Heart right ventricle (tissue), 16 donors: ENCODE measurements at regions of chr14 and their contacts with region 1.

Region 1: GRCh38 chr14:73633116-73634010 is 11.4 kb upstream of the DNAL1 start:
- DNase-seq: peak; percentile 59 to 65
- ATAC-seq: peak; percentile 86 to 92 (median 90)
- H3K4me3 ChIP-seq: peak overlapping the region; percentile 41 to 70 (median 62)
- H3K27ac ChIP-seq: peak overlapping the region in 9 of 10 donors; percentile 2 to 75 (median 64)
- H3K4me1 ChIP-seq: peaks cover 0 to 17% (median 13%) of the 10 kb centered on the region in 9 donors
- H3K27me3 ChIP-seq: peaks cover 0 to 15% (median 0%) of the 10 kb centered on the region in 7 donors
- CTCF ChIP-seq: peak; percentile 83 to 93 (median 87)

Region 2: GRCh38 chr14:73231981-73232851 is 401.1 kb before region 1 on chr14:
- intact Hi-C with region 1: no loop called
- DNase-seq: no peak
- ATAC-seq: peak in 1 of 8 donors; percentile 48
- H3K4me3 ChIP-seq: no peak overlapping the region
- H3K27ac ChIP-seq: peak overlapping the region in 1 of 10 donors; percentile 69
- H3K4me1 ChIP-seq: peaks cover 6 to 59% (median 19%) of the 10 kb centered on the region in 9 donors
- H3K27me3 ChIP-seq: peaks cover under 1 to 50% (median 29%) of the 10 kb centered on the region in 7 donors
- CTCF ChIP-seq: peak in 1 of 9 donors; percentile 24

Region 3: DNA sequence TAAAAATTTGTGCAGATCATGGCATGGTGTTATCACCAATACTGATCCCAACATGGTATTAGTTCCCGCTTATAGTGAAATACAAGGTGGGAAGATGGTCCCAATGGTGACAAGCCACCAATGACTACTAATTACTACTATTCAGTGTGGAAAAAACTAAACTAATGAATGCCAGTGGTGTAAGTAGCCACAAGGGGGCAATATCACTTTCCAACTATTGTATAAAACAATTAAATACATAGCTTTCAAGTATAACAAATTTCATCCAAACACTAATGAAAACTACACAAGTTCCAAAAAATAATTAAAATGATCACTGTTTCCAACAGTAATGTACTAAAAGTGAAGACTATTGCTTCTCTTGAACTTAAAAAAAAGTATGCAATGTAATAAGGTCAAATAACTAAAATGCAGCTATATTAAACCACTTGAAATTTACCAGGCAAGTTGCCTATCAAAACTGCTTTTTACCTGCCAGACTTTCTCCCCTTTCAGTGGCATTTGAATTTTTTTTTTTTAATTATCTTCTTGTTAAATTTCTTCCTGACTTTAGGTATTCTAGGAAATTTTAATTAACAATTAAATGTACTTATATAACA is 338.1 kb before region 1 on chr14:
- intact Hi-C with region 1: loop called in 1 of 10 experiments (anchors 10 kb)
- DNase-seq: peak in 1 of 2 donors; percentile 14
- ATAC-seq: peak in 1 of 8 donors; percentile 22
- H3K4me3 ChIP-seq: no peak overlapping the region
- H3K27ac ChIP-seq: no peak overlapping the region
- H3K4me1 ChIP-seq: no peaks in the 10 kb centered on the region
- H3K27me3 ChIP-seq: no peaks in the 10 kb centered on the region
- CTCF ChIP-seq: peak; percentile 57 to 86 (median 75)

Region 4: GRCh38 chr14:73503648-73504047 is 129.7 kb before region 1 on chr14:
- intact Hi-C with region 1: loop called in 7 of 10 experiments (anchors 2 to 5 kb)
- DNase-seq: no peak
- ATAC-seq: no peak
- H3K4me3 ChIP-seq: no peak overlapping the region
- H3K27ac ChIP-seq: no peak overlapping the region
- H3K4me1 ChIP-seq: no peaks in the 10 kb centered on the region
- H3K27me3 ChIP-seq: no peaks in the 10 kb centered on the region
- CTCF ChIP-seq: no peak